ENCODE measurements at regions of chr5 and their contacts with region 1.

Region 1: DNA sequence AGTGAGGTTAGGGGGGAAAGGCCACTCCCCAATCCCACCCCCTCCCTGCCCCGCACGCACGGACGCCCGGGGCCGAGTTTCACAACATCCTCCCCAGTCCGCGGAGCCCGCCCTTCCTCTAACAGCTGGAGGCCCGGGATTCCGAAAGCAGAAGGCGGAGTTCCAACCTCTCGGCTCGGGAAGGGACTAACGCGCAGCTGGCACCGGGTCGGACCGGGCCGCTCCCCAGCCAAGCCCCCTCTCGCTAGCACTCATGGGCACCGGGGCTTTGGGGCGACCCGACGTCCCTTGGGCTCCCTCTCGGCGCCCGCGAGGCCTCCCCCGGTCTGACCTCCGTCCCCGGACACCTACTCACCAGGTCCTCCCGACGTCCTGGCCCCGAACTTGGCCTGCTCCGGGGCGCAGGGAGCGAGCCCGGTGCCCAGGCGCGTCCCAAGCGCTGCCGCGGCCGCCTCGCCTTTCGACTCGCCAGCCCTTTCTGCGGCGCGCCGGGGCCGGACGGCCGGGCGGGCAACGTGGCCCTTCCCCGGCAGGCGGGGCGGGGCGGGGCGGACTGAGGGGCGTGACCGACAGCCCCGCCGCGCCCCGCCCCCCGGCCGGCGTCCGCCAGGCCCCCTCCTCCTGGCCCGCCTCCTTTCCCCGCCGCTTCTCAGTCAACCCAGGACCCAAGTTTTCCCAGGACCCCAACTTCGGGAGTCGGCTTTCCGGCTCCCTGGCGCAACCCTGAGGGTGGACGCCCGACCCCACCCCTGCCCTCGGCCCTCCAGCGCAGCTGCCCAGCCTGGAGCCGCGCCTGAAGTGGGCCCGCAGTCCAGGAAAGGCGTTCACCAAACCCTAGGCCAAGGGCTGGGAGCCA is at the start of gene MGAT1:
- DNase-seq: peak; percentile 84
- ATAC-seq: peak; percentile 60
- H3K4me3 Mint-ChIP-seq: peak within 1 kb of the TSS; percentile 91
- H3K27ac Mint-ChIP-seq: peak within 1 kb of the TSS; percentile 91
- H3K4me1 Mint-ChIP-seq: peaks cover 84% of the 10 kb centered on the region
- H3K27me3 Mint-ChIP-seq: no peaks in the 10 kb centered on the region
- CTCF ChIP-seq: no peak
- total RNA-seq, gene MGAT1: 66.9 and 74.5 TPM in 2 replicates

Region 2: GRCh38 chr5:180784497-180785097 is 18.0 kb before region 1 on chr5:
- CTCF ChIA-PET with region 1: interaction called, 8 read pairs
- POLR2A ChIA-PET with region 1: interaction called, 4 read pairs
- intact Hi-C with region 1: loop called (anchors 1 kb)
- DNase-seq: peak; percentile 58
- ATAC-seq: peak; percentile 89
- H3K4me3 Mint-ChIP-seq: no peak overlapping the region
- H3K27ac Mint-ChIP-seq: no peak overlapping the region
- H3K4me1 Mint-ChIP-seq: no peaks in the 10 kb centered on the region
- H3K27me3 Mint-ChIP-seq: no peaks in the 10 kb centered on the region
- CTCF ChIP-seq: peak; percentile 36

Region 3: DNA sequence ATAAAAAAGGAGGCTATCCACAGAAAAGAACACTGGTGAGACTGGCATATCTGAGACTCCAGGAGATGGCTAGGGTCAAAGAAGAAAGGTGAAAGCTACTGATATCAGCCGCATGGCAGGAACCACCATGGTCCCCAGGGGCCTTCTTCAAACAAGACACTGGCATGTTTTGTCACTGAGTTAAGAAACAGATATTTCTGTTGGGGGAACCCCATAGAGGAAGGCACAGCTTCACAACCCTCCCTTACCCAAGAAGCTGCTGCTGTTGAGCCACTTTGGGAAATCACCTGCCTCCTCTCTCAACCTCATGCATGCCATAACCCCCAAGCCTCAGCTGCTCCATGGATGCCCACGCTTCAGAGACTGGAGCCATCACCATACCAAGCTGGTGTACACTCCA is 172.8 kb after region 1 on chr5:
- CTCF ChIA-PET with region 1: no interaction called
- POLR2A ChIA-PET with region 1: interaction called, 3 read pairs
- intact Hi-C with region 1: loop called (anchors 1 kb)
- DNase-seq: peak; percentile 41
- ATAC-seq: peak; percentile 99
- H3K4me3 Mint-ChIP-seq: peak overlapping the region; percentile 47
- H3K27ac Mint-ChIP-seq: peak overlapping the region; percentile 81
- H3K4me1 Mint-ChIP-seq: peaks cover 40% of the 10 kb centered on the region
- H3K27me3 Mint-ChIP-seq: no peaks in the 10 kb centered on the region
- CTCF ChIP-seq: no peak

Region 4: GRCh38 chr5:181052672-181053487 is 250.3 kb after region 1 on chr5:
- CTCF ChIA-PET with region 1: no interaction called
- POLR2A ChIA-PET with region 1: no interaction called
- intact Hi-C with region 1: loop called (anchors 2 kb)
- DNase-seq: peak; percentile 42
- ATAC-seq: peak; percentile 35
- H3K4me3 Mint-ChIP-seq: peak overlapping the region; percentile 85
- H3K27ac Mint-ChIP-seq: peak overlapping the region; percentile 70
- H3K4me1 Mint-ChIP-seq: peaks cover 46% of the 10 kb centered on the region
- H3K27me3 Mint-ChIP-seq: peaks cover 52% of the 10 kb centered on the region
- CTCF ChIP-seq: no peak

Region 5: GRCh38 chr5:181081989-181082388 is 279.4 kb after region 1 on chr5:
- CTCF ChIA-PET with region 1: no interaction called
- POLR2A ChIA-PET with region 1: no interaction called
- intact Hi-C with region 1: no loop called
- DNase-seq: no peak
- ATAC-seq: no peak
- H3K4me3 Mint-ChIP-seq: no peak overlapping the region
- H3K27ac Mint-ChIP-seq: no peak overlapping the region
- H3K4me1 Mint-ChIP-seq: no peaks in the 10 kb centered on the region
- H3K27me3 Mint-ChIP-seq: peaks cover 8% of the 10 kb centered on the region
- CTCF ChIP-seq: no peak

Region 6: GRCh38 chr5:181181650-181182565 is 379.4 kb after region 1 on chr5:
- CTCF ChIA-PET with region 1: no interaction called
- POLR2A ChIA-PET with region 1: no interaction called
- intact Hi-C with region 1: loop called (anchors 2 kb)
- DNase-seq: no peak
- ATAC-seq: peak; percentile 70
- H3K4me3 Mint-ChIP-seq: no peak overlapping the region
- H3K27ac Mint-ChIP-seq: no peak overlapping the region
- H3K4me1 Mint-ChIP-seq: peaks cover 31% of the 10 kb centered on the region
- H3K27me3 Mint-ChIP-seq: no peaks in the 10 kb centered on the region
- CTCF ChIP-seq: peak; percentile 41

Region 7: DNA sequence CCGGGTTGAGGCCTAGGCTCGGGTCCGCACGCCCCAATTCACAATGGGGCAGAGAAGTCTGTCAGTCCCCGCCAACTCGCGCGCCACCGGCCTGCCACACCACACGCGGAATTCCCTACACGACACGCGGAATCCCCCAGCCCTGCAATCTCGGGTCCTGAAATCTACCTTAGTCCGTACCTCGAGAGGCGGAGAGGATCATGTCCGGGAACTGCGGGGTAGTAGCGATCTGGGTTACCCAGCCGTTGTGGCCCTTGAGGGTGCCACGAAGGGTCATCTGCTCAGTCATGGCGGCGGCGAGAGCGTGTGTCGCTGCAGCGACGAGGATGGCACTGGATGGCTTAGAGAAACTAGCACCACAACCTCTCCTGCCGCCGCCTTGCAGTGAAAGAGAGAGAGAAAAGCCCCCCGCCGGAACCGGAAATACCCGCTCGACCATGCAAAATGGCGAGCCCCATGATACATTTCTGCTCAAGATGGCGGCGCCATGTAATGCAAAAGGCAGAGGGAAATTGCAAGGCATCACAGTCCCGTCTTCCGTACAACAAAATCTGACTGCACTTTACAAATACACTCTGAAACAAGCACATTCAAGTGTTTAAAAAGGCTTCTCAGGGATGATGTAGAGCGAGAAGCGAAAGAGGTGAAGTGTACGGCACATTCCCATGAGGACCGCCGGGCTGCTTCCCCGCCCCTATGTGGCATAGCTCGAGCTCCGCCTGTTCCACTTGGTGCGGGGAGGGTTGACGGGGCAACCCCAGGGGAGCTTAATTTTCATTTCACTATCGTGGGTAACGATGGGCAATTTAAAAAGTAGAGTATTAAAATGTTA is 441.2 kb after region 1 on chr5 and contains the start of gene RACK1:
- CTCF ChIA-PET with region 1: no interaction called
- POLR2A ChIA-PET with region 1: no interaction called
- intact Hi-C with region 1: loop called (anchors 1 kb)
- DNase-seq: peak; percentile 79
- ATAC-seq: peak; percentile 79
- H3K4me3 Mint-ChIP-seq: peak within 1 kb of the TSS; percentile 96
- H3K27ac Mint-ChIP-seq: peak within 1 kb of the TSS; percentile 98
- H3K4me1 Mint-ChIP-seq: peaks cover 73% of the 10 kb centered on the region
- H3K27me3 Mint-ChIP-seq: no peaks in the 10 kb centered on the region
- CTCF ChIP-seq: no peak
- total RNA-seq, gene RACK1: 2,528 and 2,812 TPM in 2 replicates